Uterus (tissue), 4 donors: ENCODE measurements at regions of chr1 and their contacts with region 1.

Region 1: DNA sequence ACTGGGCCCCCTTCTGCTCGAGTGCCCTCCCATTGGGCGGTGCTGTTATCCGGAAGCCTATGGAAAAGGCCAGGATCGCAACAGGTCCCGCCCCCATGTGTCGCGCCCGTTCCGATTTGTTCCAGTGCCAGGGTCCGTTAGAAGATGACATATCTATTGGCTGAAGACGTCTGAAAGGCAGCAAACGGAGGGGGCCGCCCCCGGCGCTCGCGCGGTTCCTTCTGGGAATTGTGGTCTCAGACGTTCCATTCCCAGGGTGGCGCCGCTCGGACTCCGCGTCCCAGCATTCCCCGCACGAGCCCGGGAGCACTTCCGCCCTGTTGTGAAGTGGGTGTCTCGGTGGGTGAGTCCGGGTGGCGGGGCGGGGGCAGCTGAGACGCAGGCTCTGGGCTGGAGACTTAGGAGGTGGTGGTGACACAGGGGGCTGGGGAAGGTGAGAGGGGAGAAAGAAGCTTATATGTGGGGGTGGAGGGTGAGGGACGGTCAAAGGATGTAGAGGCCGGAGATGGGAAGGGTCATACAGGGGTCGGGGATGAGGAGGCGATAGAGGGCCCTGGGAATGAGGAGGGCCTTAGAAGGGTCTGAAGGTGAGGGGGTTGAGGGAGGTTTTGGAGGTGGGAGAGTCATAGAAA is at the start of gene ZSCAN20:
- DNase-seq: peak; percentile 98 to 99
- H3K4me3 ChIP-seq: peak within 1 kb of the TSS; percentile 58 to 61
- H3K27ac ChIP-seq: peak within 1 kb of the TSS; percentile 77 to 87
- H3K4me1 ChIP-seq: no peaks in the 10 kb centered on the region
- H3K27me3 ChIP-seq: no peaks in the 10 kb centered on the region
- CTCF ChIP-seq: peak in 2 of 4 experiments; percentile 5 to 6
- POLR2A ChIP-seq: peak in 1 of 2 donors; percentile 31
- total RNA-seq, gene ZSCAN20: 2.4 to 16.0 (median 5.2) TPM

Region 2: DNA sequence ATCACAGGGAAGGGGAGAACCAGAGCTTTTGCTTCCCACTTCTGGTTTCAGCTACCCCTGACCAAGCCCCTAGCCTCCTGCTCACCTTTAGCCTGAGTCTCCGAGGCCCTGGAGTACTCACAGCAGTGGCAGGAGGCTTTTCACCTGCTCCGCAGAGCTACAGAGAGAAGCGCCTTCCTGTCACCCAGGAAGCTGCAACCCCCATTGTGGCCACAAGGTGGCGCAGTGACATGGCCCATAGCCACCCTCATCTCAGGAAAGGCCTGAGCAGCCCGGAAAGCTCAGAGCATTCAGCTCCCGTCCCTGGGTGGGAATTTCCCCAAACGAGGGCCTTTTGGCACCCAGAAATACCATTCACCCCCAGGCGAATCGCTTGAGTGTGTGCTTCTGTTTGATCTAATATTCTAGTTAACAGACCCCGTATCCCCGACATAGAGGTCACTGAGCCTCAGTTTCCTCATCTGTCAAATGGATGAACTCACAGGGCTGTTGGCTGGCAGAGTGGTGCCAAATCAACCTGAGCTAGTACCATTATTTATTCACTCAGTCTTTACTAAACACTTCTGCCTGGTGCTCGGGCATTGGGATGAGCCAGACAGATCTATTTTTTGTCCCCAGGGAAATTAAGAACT is 176.9 kb before region 1 on chr1:
- intact Hi-C with region 1: loop called (anchors 5 kb)
- DNase-seq: peak; percentile 87 to 88
- H3K4me3 ChIP-seq: no peak overlapping the region
- H3K27ac ChIP-seq: peak overlapping the region; percentile 16 to 20
- H3K4me1 ChIP-seq: peaks cover 0 to 2% of the 10 kb centered on the region in 2 donors
- H3K27me3 ChIP-seq: no peaks in the 10 kb centered on the region
- CTCF ChIP-seq: peak; percentile 94 to 99 (median 96)
- POLR2A ChIP-seq: no peak

Region 3: DNA sequence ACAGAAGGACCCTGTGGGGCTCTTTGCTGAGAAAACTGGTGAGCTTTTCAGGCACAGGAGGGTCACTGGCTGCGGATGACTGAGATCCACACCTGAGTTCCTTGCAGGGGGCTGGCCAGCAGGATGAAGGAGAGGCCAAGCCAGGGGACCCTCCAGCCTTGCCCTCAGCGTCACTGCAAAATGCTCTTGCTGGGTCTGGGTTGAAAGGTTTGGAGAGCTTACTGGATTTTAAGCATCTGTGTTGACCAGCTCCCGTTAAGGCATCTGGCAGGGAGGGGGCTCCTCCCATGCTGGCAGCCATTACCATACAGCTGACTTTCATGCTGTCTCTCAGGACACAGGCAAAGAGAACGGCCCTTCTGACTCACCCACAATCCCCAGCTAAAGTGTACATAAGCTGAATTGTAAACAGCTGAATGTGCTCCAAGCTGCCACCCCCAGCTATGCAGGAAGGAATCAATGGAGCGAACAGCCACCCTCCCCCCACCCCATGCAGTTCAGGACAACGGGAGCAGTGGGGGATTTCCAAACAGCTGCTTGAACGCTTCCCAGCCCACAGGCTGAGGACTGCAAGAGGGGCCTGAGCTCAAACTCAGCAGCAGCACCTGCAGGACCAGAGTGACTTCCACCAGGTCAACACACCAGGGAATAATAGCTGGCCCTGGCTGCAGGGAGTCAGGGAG is 130.3 kb before region 1 on chr1:
- intact Hi-C with region 1: no loop called
- DNase-seq: peak; percentile 75 to 79
- H3K4me3 ChIP-seq: peak overlapping the region in 1 of 2 donors; percentile 3
- H3K27ac ChIP-seq: peak overlapping the region; percentile 75 to 88
- H3K4me1 ChIP-seq: peaks cover 42 to 43% of the 10 kb centered on the region in 2 donors
- H3K27me3 ChIP-seq: no peaks in the 10 kb centered on the region
- CTCF ChIP-seq: no peak
- POLR2A ChIP-seq: no peak